ENCODE measurements at regions of chr1 and their contacts with region 1.

Region 1: GRCh38 chr1:167268398-167268787 is 47.7 kb downstream of the POU2F1 start:
- DNase-seq: no peak
- H3K4me3 ChIP-seq: no peak overlapping the region
- H3K27ac ChIP-seq: no peak overlapping the region
- H3K4me1 ChIP-seq: no peaks in the 10 kb centered on the region
- H3K27me3 ChIP-seq: no peaks in the 10 kb centered on the region
- CTCF ChIP-seq: no peak

Region 2: DNA sequence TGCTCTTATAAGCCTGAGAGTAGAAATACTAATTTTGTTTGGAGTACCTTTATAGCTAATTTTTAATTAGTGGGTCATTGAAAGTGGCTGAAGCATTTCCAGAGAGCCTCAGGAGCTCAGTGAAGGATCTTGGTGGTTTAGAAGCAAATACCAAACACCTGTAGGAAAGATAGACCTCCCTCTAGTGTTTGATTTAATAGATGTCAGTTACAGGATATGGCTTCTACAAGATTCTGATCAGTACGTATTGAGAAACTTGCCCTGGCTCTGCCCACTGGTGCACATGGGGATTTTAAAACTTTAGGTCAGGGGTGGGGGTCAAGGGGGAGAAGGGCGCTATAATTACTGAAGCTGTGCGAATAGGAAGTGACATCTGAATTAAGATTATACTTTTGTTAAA is 74.5 kb after region 1 on chr1:
- intact Hi-C with region 1: loop called (anchors 5 kb)
- DNase-seq: no peak
- H3K4me3 ChIP-seq: no peak overlapping the region
- H3K27ac ChIP-seq: no peak overlapping the region
- H3K4me1 ChIP-seq: no peaks in the 10 kb centered on the region
- H3K27me3 ChIP-seq: no peaks in the 10 kb centered on the region
- CTCF ChIP-seq: no peak

Region 3: GRCh38 chr1:167442124-167442848 is 173.9 kb after region 1 on chr1:
- intact Hi-C with region 1: loop called (anchors 2 kb)
- DNase-seq: peak; percentile 98
- H3K4me3 ChIP-seq: no peak overlapping the region
- H3K27ac ChIP-seq: peak overlapping the region; percentile 43
- H3K4me1 ChIP-seq: peaks cover 3% of the 10 kb centered on the region
- H3K27me3 ChIP-seq: no peaks in the 10 kb centered on the region
- CTCF ChIP-seq: peak; percentile 80